Caco-2 (cell line): ENCODE measurements at regions of chr2 and their contacts with region 1.

Region 1: DNA sequence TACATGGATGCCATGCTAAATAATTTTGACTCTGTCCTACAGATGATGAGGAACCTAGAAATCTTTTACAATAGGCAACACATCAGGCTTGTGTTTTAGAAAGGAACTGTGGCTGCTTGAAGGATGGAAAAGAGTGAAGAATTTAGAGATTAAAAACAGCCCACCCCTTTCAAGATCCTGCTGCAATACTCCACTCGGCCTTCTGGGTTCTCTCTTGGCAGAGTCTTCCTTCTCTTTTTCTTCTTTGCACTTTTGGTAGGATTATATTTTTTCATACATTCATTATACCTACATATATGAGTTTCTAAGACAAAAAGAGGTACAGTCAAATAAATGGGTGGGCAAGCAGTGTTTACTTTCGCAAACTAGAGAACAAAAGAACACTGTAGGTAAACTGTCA is 474.3 kb downstream of the ERBB4 start:
- DNase-seq: no peak
- H3K4me3 ChIP-seq: no peak overlapping the region
- H3K4me3 Mint-ChIP-seq: no peak overlapping the region
- H3K27ac Mint-ChIP-seq: no peak overlapping the region
- H3K4me1 ChIP-seq: no peaks in the 10 kb centered on the region
- H3K4me1 Mint-ChIP-seq: no peaks in the 10 kb centered on the region
- H3K27me3 ChIP-seq: no peaks in the 10 kb centered on the region
- H3K27me3 Mint-ChIP-seq: peaks cover 2% of the 10 kb centered on the region
- CTCF ChIP-seq: no peak

Region 2: DNA sequence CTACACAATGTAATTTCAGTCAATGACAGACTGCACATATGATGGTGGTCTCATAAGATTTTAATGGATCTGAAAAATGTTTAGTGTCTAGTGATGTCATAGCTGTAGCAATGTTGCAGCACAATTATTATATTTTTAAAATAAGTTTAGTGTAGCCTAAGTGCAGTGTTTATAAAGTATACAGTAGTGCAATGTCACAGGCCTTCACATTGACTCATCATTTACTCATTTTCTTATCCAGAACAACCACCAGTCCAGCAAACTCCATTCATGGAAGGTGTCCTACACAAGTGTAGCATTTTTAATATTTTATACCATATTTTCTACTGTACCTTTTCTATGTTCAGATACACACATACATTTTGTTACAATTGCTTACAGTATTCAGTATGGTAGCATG is 188.8 kb before region 1 on chr2:
- CTCF ChIA-PET with region 1: interaction called, 12 read pairs
- POLR2A ChIA-PET with region 1: no interaction called
- intact Hi-C with region 1: no loop called
- DNase-seq: no peak
- H3K4me3 ChIP-seq: no peak overlapping the region
- H3K4me3 Mint-ChIP-seq: no peak overlapping the region
- H3K27ac Mint-ChIP-seq: no peak overlapping the region
- H3K4me1 ChIP-seq: no peaks in the 10 kb centered on the region
- H3K4me1 Mint-ChIP-seq: no peaks in the 10 kb centered on the region
- H3K27me3 ChIP-seq: no peaks in the 10 kb centered on the region
- H3K27me3 Mint-ChIP-seq: no peaks in the 10 kb centered on the region
- CTCF ChIP-seq: no peak

Region 3: DNA sequence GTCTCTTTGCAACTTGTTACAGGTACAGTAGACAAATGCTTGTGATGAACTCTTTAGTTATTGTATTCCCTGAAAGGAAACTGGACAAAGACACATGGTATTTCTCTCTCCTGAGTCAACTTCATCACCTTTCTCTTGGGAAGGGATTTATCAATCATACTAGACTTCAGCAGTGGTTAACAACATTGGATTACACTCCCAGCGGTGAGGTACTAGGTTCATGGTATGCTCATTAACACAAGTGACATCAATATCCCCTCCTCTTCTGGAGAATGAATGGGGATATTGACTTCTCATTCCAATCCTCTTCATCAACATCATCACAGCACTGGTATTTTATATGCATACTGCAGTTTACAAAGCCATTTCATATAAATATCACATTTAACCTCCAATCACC is 100.3 kb before region 1 on chr2:
- CTCF ChIA-PET with region 1: no interaction called
- POLR2A ChIA-PET with region 1: no interaction called
- intact Hi-C with region 1: no loop called
- DNase-seq: no peak
- H3K4me3 ChIP-seq: no peak overlapping the region
- H3K4me3 Mint-ChIP-seq: no peak overlapping the region
- H3K27ac Mint-ChIP-seq: no peak overlapping the region
- H3K4me1 ChIP-seq: no peaks in the 10 kb centered on the region
- H3K4me1 Mint-ChIP-seq: no peaks in the 10 kb centered on the region
- H3K27me3 ChIP-seq: no peaks in the 10 kb centered on the region
- H3K27me3 Mint-ChIP-seq: no peaks in the 10 kb centered on the region
- CTCF ChIP-seq: no peak

Region 4: GRCh38 chr2:212037062-212037461 is 27.3 kb before region 1 on chr2:
- CTCF ChIA-PET with region 1: no interaction called
- POLR2A ChIA-PET with region 1: no interaction called
- intact Hi-C with region 1: no loop called
- DNase-seq: no peak
- H3K4me3 ChIP-seq: no peak overlapping the region
- H3K4me3 Mint-ChIP-seq: no peak overlapping the region
- H3K27ac Mint-ChIP-seq: no peak overlapping the region
- H3K4me1 ChIP-seq: no peaks in the 10 kb centered on the region
- H3K4me1 Mint-ChIP-seq: no peaks in the 10 kb centered on the region
- H3K27me3 ChIP-seq: no peaks in the 10 kb centered on the region
- H3K27me3 Mint-ChIP-seq: peaks cover 4% of the 10 kb centered on the region
- CTCF ChIP-seq: no peak

Region 5: DNA sequence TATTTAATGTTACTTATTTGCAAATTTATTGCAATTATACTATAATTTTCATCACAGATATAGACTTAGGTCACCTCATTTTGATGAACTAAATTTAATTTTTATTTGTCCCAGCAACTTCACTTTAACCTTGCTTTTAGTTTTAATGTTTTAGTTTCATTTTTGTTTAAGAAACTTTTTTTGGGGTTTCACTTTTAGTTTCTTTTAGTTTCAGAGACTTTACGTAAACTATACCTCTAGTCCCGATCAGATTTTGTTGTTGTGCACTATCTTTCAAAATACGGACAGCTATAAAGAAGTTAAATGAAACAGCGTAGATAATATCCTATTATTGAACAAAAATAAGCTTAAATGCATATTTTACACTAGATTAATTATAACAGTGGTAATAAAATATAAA is 13.8 kb after region 1 on chr2:
- CTCF ChIA-PET with region 1: no interaction called
- POLR2A ChIA-PET with region 1: no interaction called
- intact Hi-C with region 1: no loop called
- DNase-seq: no peak
- H3K4me3 ChIP-seq: no peak overlapping the region
- H3K4me3 Mint-ChIP-seq: no peak overlapping the region
- H3K27ac Mint-ChIP-seq: no peak overlapping the region
- H3K4me1 ChIP-seq: no peaks in the 10 kb centered on the region
- H3K4me1 Mint-ChIP-seq: no peaks in the 10 kb centered on the region
- H3K27me3 ChIP-seq: no peaks in the 10 kb centered on the region
- H3K27me3 Mint-ChIP-seq: peaks cover 2% of the 10 kb centered on the region
- CTCF ChIP-seq: no peak